ENCODE measurements at regions of chr18 and their contacts with region 1.

Region 1: DNA sequence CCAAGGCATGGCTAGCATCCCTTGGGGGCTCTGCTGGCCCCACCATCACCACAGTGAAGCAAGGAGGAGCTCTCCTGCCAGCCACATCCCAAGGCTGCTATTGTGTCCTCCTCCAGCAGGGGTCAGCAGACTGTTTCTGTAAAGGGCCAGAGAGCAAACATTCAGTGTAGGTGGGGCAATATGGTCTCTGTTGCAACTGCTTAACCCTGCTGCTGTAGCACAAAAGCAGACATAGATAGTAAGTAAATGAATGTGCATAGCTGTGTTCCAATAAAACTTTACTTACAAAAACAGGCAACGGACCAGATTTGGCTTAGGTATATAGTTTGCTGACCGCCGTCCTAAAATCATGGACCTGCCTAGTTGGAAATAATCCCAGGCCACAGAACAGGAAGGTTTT is 36.4 kb upstream of the ZBTB7C start:
- DNase-seq: peak; percentile 61 to 68 (median 65)
- H3K4me3 ChIP-seq: no peak overlapping the region
- H3K4me3 Mint-ChIP-seq: no peak overlapping the region
- H3K27ac ChIP-seq: no peak overlapping the region
- H3K27ac Mint-ChIP-seq: no peak overlapping the region
- H3K4me1 ChIP-seq: no peaks in the 10 kb centered on the region
- H3K4me1 Mint-ChIP-seq: peaks cover 8 to 13% (median 10%) of the 10 kb centered on the region in 4 donors
- H3K27me3 ChIP-seq: no peaks in the 10 kb centered on the region
- H3K27me3 Mint-ChIP-seq: peaks cover 13% of the 10 kb centered on the region in 2 donors

Region 2: GRCh38 chr18:48455555-48456478 is 10.3 kb after region 1 on chr18:
- CTCF ChIA-PET with region 1: interaction called, 58 read pairs
- POLR2A ChIA-PET with region 1: interaction called, 3 read pairs
- intact Hi-C with region 1: loop called (anchors 1 kb)
- DNase-seq: peak; percentile 51 to 74 (median 60)
- H3K4me3 ChIP-seq: no peak overlapping the region
- H3K4me3 Mint-ChIP-seq: peak overlapping the region in 7 of 8 donors; percentile 25 to 78 (median 72)
- H3K27ac ChIP-seq: no peak overlapping the region
- H3K27ac Mint-ChIP-seq: peak overlapping the region in 6 of 7 donors; percentile 49 to 88 (median 76)
- H3K4me1 ChIP-seq: peaks cover 40% of the 10 kb centered on the region
- H3K4me1 Mint-ChIP-seq: peaks cover 21 to 53% (median 36%) of the 10 kb centered on the region in 4 donors
- H3K27me3 ChIP-seq: peaks cover 8% of the 10 kb centered on the region
- H3K27me3 Mint-ChIP-seq: peaks cover 13 to 23% of the 10 kb centered on the region in 2 donors

Region 3: GRCh38 chr18:48460929-48461583 is 15.5 kb after region 1 on chr18:
- CTCF ChIA-PET with region 1: interaction called, 58 read pairs
- POLR2A ChIA-PET with region 1: interaction called, 3 read pairs
- intact Hi-C with region 1: loop called (anchors 1 kb)
- DNase-seq: no peak
- H3K4me3 ChIP-seq: no peak overlapping the region
- H3K4me3 Mint-ChIP-seq: no peak overlapping the region
- H3K27ac ChIP-seq: no peak overlapping the region
- H3K27ac Mint-ChIP-seq: no peak overlapping the region
- H3K4me1 ChIP-seq: peaks cover 20% of the 10 kb centered on the region
- H3K4me1 Mint-ChIP-seq: peaks cover 9 to 20% (median 16%) of the 10 kb centered on the region in 4 donors
- H3K27me3 ChIP-seq: peaks cover 8% of the 10 kb centered on the region
- H3K27me3 Mint-ChIP-seq: peaks cover 22 to 36% of the 10 kb centered on the region in 2 donors

Region 4: DNA sequence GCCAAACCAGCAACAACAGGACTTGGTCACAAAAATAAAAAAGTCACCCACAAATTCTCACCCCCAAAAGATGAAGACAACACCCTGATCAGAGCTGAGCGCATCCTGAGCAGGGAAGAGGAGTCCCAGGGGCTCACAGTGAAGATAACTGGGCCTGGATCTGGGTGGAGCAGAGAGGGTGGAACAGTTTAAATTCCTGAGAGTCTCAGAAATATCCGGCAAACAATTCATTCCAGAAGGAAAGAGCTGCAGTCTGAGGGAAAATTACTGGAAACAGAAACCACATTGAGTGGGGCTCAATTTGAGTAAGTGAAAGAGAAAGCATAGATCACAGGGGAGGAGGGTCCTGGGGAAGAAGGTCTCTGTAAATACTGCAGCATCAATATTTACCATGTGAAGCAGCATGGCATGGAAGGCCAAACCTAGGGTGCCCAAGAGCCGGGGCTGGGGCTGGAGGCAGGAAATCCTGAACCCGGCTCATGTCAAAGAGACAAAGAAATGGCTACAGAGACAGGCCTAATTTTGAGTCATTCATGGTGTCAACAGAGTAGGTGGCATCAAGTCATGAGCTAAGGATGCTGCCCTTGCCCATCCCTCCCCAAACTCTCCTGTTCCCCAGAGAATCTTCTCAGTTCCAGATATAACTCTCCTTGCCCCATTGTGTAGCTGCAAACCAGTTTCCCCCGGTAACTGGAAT is 25.1 kb after region 1 on chr18:
- CTCF ChIA-PET with region 1: interaction called, 53 read pairs
- POLR2A ChIA-PET with region 1: no interaction called
- intact Hi-C with region 1: loop called (anchors 1 kb)
- DNase-seq: no peak
- H3K4me3 ChIP-seq: no peak overlapping the region
- H3K4me3 Mint-ChIP-seq: no peak overlapping the region
- H3K27ac ChIP-seq: no peak overlapping the region
- H3K27ac Mint-ChIP-seq: no peak overlapping the region
- H3K4me1 ChIP-seq: no peaks in the 10 kb centered on the region
- H3K4me1 Mint-ChIP-seq: no peaks in the 10 kb centered on the region
- H3K27me3 ChIP-seq: no peaks in the 10 kb centered on the region
- H3K27me3 Mint-ChIP-seq: peaks cover 18 to 39% of the 10 kb centered on the region in 2 donors

Measured in CD4-positive, alpha-beta memory T cell (primary cell).